ENCODE measurements at regions of chr2 and their contacts with region 1.

Region 1: GRCh38 chr2:127064642-127065250 is 42.2 kb downstream of the BIN1 start:
- DNase-seq: peak; percentile 84 to 94 (median 92)
- ATAC-seq: peak; percentile 71 to 93 (median 90)
- H3K4me3 ChIP-seq: peak overlapping the region in 2 of 12 donors; percentile 13 to 18
- H3K27ac ChIP-seq: peak overlapping the region in 9 of 12 donors; percentile 49 to 77 (median 63)
- H3K4me1 ChIP-seq: peaks cover 2 to 55% (median 23%) of the 10 kb centered on the region in 12 donors
- H3K27me3 ChIP-seq: no peaks in the 10 kb centered on the region
- CTCF ChIP-seq: peak in 2 of 12 donors; percentile 6 to 11
- POLR2A ChIP-seq: no peak

Region 2: DNA sequence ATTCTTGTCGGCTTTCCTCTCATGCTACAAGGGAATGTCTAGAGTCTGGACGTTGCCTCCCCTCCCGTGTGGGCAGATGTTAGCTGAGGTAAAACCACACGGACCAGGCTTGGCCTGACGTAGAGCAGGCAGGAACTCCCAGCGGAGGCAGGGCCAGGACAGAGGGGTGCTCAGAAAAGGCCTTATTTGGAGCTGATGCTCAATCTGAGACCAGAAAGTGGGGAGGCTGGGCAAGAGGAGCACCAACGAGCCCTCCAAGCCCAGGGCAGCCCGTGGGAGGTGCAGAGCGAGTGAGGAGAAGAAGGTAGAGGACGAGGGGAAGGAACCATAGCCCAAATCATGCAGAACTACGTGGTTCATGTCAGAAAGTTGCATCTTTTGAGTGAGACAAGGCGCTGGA is 157.1 kb before region 1 on chr2:
- intact Hi-C with region 1: no loop called
- DNase-seq: peak in 1 of 5 donors; percentile 8
- ATAC-seq: no peak
- H3K4me3 ChIP-seq: no peak overlapping the region
- H3K27ac ChIP-seq: no peak overlapping the region
- H3K4me1 ChIP-seq: no peaks in the 10 kb centered on the region
- H3K27me3 ChIP-seq: peaks cover 0 to 23% (median 0%) of the 10 kb centered on the region in 9 donors
- CTCF ChIP-seq: no peak
- POLR2A ChIP-seq: no peak

Region 3: GRCh38 chr2:127100251-127101047 is 35.7 kb after region 1 on chr2:
- intact Hi-C with region 1: loop called in 2 of 10 experiments (anchors 5 kb)
- DNase-seq: peak in 1 of 5 donors; percentile 20
- ATAC-seq: no peak
- H3K4me3 ChIP-seq: no peak overlapping the region
- H3K27ac ChIP-seq: no peak overlapping the region
- H3K4me1 ChIP-seq: peaks cover 0 to 21% (median 3%) of the 10 kb centered on the region in 12 donors
- H3K27me3 ChIP-seq: no peaks in the 10 kb centered on the region
- CTCF ChIP-seq: no peak
- POLR2A ChIP-seq: no peak

Region 4: GRCh38 chr2:127106951-127107621 is 42.3 kb after region 1 on chr2 and contains the start of gene BIN1:
- intact Hi-C with region 1: loop called in 2 of 10 experiments (anchors 5 kb)
- DNase-seq: peak; percentile 86 to 92 (median 87)
- ATAC-seq: peak; percentile 63 to 91 (median 86)
- H3K4me3 ChIP-seq: peak within 1 kb of the TSS; percentile 59 to 90 (median 72)
- H3K27ac ChIP-seq: peak within 1 kb of the TSS in 11 of 12 donors; percentile 34 to 83 (median 71)
- H3K4me1 ChIP-seq: peaks cover 0 to 29% (median 14%) of the 10 kb centered on the region in 12 donors
- H3K27me3 ChIP-seq: peaks cover 0 to 8% (median 0%) of the 10 kb centered on the region in 9 donors
- CTCF ChIP-seq: no peak
- POLR2A ChIP-seq: peak in 1 of 2 donors; percentile 56
- total RNA-seq, gene BIN1: 10.9 to 22.2 (median 16.8) TPM

Region 5: GRCh38 chr2:127174136-127174535 is 109.4 kb after region 1 on chr2:
- intact Hi-C with region 1: loop called in 2 of 10 experiments (anchors 5 to 10 kb)
- DNase-seq: no peak
- ATAC-seq: peak in 3 of 4 donors; percentile 29 to 57 (median 29)
- H3K4me3 ChIP-seq: no peak overlapping the region
- H3K27ac ChIP-seq: peak overlapping the region in 1 of 12 donors; percentile 88
- H3K4me1 ChIP-seq: peaks cover 0 to 41% (median 11%) of the 10 kb centered on the region in 12 donors
- H3K27me3 ChIP-seq: no peaks in the 10 kb centered on the region
- CTCF ChIP-seq: peak in 7 of 12 donors; percentile 12 to 47 (median 20)
- POLR2A ChIP-seq: no peak

Region 6: GRCh38 chr2:127293748-127294562 is 229.2 kb after region 1 on chr2 and contains the start of gene ERCC3:
- intact Hi-C with region 1: loop called in 1 of 10 experiments (anchors 10 kb)
- DNase-seq: peak; percentile 84 to 94 (median 91)
- ATAC-seq: peak; percentile 89 to 98 (median 97)
- H3K4me3 ChIP-seq: peak within 1 kb of the TSS; percentile 75 to 99 (median 88)
- H3K27ac ChIP-seq: peak within 1 kb of the TSS in 11 of 12 donors; percentile 29 to 88 (median 78)
- H3K4me1 ChIP-seq: peaks cover 0 to 25% (median 12%) of the 10 kb centered on the region in 12 donors
- H3K27me3 ChIP-seq: no peaks in the 10 kb centered on the region
- CTCF ChIP-seq: no peak
- POLR2A ChIP-seq: peak in 1 of 2 donors; percentile 62
- total RNA-seq, gene ERCC3: 18.1 to 27.9 (median 23.1) TPM

Region 7: DNA sequence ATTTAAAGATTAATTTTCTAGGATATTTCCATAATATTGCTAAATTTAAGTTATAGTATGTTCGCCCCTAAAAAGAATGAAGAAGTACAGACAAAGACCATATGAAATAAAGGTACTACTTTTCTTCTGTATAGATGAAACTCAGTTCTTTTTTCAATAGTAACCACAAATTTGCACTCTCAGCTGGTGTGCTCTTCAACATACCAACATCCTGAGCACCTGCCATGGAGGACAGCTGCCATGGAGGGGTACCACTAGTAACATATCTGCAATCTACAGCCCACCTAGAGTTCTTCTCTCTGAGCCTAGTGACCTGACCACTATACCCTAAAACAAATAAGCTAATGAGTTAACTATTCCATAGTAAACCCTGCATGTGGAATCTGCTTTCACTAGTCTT is 266.0 kb after region 1 on chr2:
- intact Hi-C with region 1: no loop called
- DNase-seq: no peak
- ATAC-seq: no peak
- H3K4me3 ChIP-seq: no peak overlapping the region
- H3K27ac ChIP-seq: no peak overlapping the region
- H3K4me1 ChIP-seq: no peaks in the 10 kb centered on the region
- H3K27me3 ChIP-seq: no peaks in the 10 kb centered on the region
- CTCF ChIP-seq: no peak
- POLR2A ChIP-seq: no peak